ENCODE measurements at regions of chr6 and their contacts with region 1.

Region 1: GRCh38 chr6:79233611-79234149 is 802 bp downstream of the HMGN3 start:
- DNase-seq: peak; percentile 85
- CTCF ChIP-seq: no peak

Region 2: GRCh38 chr6:79330704-79331103 is 97.0 kb after region 1 on chr6:
- CTCF ChIA-PET with region 1: no interaction called
- POLR2A ChIA-PET with region 1: interaction called, 11 read pairs
- DNase-seq: no peak
- CTCF ChIP-seq: no peak